Breast epithelium (tissue), 4 donors: ENCODE measurements at regions of chr2 and their contacts with region 1.

Region 1: GRCh38 chr2:165660361-165660760 is 133.7 kb downstream of the GALNT3 start:
- DNase-seq: no peak
- H3K4me3 ChIP-seq: no peak overlapping the region
- H3K27ac ChIP-seq: no peak overlapping the region
- H3K4me1 ChIP-seq: no peaks in the 10 kb centered on the region
- H3K27me3 ChIP-seq: no peaks in the 10 kb centered on the region
- CTCF ChIP-seq: no peak
- POLR2A ChIP-seq: no peak

Region 2: DNA sequence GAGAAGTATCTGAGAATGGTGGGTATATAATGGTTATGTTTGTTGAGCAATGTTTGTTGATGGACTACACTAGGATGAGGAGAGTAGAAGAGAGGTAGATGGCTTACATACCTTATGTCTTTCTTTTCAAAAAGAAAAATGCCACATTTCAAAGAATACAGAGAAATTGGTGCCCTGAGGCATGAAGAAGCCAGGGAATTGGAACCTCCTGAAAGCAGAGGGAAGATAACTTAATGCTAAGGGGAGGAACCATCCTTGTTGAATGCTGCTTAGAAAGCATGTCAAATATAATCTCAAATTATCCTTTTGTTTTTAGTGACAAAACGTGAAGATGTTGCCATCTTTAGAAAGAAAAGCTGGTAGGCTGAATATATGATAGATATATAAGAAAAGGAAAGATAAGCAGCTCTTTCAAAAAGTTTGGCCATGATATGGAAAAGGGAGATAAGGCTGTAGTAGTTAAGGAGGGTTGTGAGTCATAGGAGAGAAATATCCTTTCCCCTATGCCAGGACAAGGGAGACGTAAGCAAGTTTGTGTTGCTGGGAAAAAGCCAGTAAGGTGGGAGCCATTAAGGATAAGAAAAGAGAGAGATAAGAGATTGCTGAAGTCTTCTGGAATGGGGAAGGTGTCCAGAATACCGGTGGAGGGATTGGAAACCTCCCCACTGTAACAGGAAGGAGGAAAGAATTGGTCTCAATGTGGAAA is 354.8 kb before region 1 on chr2:
- intact Hi-C with region 1: loop called (anchors 5 kb)
- DNase-seq: no peak
- H3K4me3 ChIP-seq: no peak overlapping the region
- H3K27ac ChIP-seq: no peak overlapping the region
- H3K4me1 ChIP-seq: no peaks in the 10 kb centered on the region
- H3K27me3 ChIP-seq: no peaks in the 10 kb centered on the region
- CTCF ChIP-seq: no peak
- POLR2A ChIP-seq: no peak